PC-9 (cell line): ENCODE measurements at regions of chr6 and their contacts with region 1.

Region 1: GRCh38 chr6:143694560-143694959 is 16.8 kb downstream of the PHACTR2 start:
- DNase-seq: no peak
- H3K4me3 ChIP-seq: no peak overlapping the region
- H3K27ac ChIP-seq: no peak overlapping the region
- H3K4me1 ChIP-seq: peaks cover 17% of the 10 kb centered on the region; the same call in 1 of the 2 replicates
- H3K27me3 ChIP-seq: no peaks in the 10 kb centered on the region
- CTCF ChIP-seq: no peak

Region 2: DNA sequence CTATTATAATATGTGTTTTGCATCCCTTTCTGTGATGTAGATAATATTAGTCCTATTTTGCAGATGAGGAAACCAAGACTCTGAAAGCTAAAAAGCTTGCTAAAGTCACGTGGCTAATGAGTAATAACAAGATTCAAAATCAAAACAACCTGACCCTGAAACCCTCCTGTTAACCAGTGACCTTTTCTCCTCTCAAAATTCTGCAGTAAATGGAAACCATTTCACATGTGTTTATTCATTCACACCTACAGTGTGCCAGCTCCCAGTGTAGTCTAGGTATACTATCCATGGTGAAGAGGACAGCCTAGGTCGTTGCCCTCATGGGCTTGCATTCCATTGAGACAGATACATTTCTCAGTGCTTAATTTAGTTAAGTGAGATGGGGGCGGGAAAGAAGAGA is 47.4 kb before region 1 on chr6:
- CTCF ChIA-PET with region 1: no interaction called
- POLR2A ChIA-PET with region 1: no interaction called
- intact Hi-C with region 1: no loop called
- DNase-seq: no peak
- H3K4me3 ChIP-seq: no peak overlapping the region
- H3K27ac ChIP-seq: no peak overlapping the region
- H3K4me1 ChIP-seq: no peaks in the 10 kb centered on the region
- H3K27me3 ChIP-seq: no peaks in the 10 kb centered on the region
- CTCF ChIP-seq: no peak

Region 3: GRCh38 chr6:143745166-143746133 is 50.9 kb after region 1 on chr6:
- CTCF ChIA-PET with region 1: no interaction called
- POLR2A ChIA-PET with region 1: interaction called, 4 read pairs
- intact Hi-C with region 1: loop called (anchors 5 kb)
- DNase-seq: peak; percentile 78 to 80
- H3K4me3 ChIP-seq: peak overlapping the region; percentile 17; the same call in 1 of the 2 replicates
- H3K27ac ChIP-seq: peak overlapping the region; percentile 54
- H3K4me1 ChIP-seq: peaks cover 32% of the 10 kb centered on the region
- H3K27me3 ChIP-seq: no peaks in the 10 kb centered on the region
- CTCF ChIP-seq: no peak